Gastrocnemius medialis (tissue), 4 donors: ENCODE measurements at regions of chr5 and their contacts with region 1.

Region 1: GRCh38 chr5:150245111-150245789 is 44.3 kb downstream of the CAMK2A start:
- DNase-seq: peak; percentile 92 to 97
- ATAC-seq: peak; percentile 60 to 71
- H3K4me3 ChIP-seq: peak overlapping the region; percentile 44 to 66 (median 61)
- H3K27ac ChIP-seq: peak overlapping the region; percentile 91 to 100 (median 100)
- H3K4me1 ChIP-seq: peaks cover 51 to 62% of the 10 kb centered on the region in 2 donors
- H3K27me3 ChIP-seq: no peaks in the 10 kb centered on the region
- CTCF ChIP-seq: no peak
- POLR2A ChIP-seq: peak; percentile 90

Region 2: GRCh38 chr5:150180241-150181026 is 64.8 kb before region 1 on chr5:
- in situ Hi-C with region 1: no loop called
- intact Hi-C with region 1: loop called (anchors 2 kb)
- DNase-seq: peak; percentile 89 to 97
- ATAC-seq: peak; percentile 87 to 93
- H3K4me3 ChIP-seq: peak overlapping the region; percentile 11 to 37 (median 27)
- H3K27ac ChIP-seq: peak overlapping the region; percentile 91 to 95 (median 94)
- H3K4me1 ChIP-seq: peaks cover 21 to 23% of the 10 kb centered on the region in 2 donors
- H3K27me3 ChIP-seq: no peaks in the 10 kb centered on the region
- CTCF ChIP-seq: no peak
- POLR2A ChIP-seq: peak; percentile 24 to 55

Region 3: DNA sequence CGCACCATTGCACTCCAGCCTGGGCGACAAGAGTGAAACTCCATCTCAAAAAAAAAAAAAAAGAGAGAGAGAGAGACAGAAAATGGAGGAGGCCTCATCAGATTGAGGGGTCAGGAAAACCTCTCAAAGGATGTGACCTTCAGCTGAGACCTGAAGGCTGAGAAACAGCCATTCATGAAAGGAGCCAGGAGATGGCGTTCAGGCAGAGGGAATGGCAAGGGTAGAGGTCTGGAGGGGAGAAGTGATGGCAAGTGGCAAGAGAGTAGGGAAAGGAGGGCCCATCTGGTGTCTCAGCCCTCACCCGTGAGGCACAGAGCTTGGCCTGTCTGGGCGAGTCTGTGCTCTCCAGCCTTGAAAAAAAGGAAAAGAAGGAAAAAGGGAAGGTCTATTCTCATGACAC is 27.3 kb after region 1 on chr5:
- in situ Hi-C with region 1: no loop called
- intact Hi-C with region 1: loop called (anchors 1 kb)
- DNase-seq: no peak
- ATAC-seq: no peak
- H3K4me3 ChIP-seq: no peak overlapping the region
- H3K27ac ChIP-seq: no peak overlapping the region
- H3K4me1 ChIP-seq: peaks cover 13 to 15% of the 10 kb centered on the region in 2 donors
- H3K27me3 ChIP-seq: no peaks in the 10 kb centered on the region
- CTCF ChIP-seq: peak in 1 of 5 experiments; percentile 18
- POLR2A ChIP-seq: no peak

Region 4: GRCh38 chr5:150357326-150358260 is 112.3 kb after region 1 on chr5 and contains the start of gene TCOF1:
- in situ Hi-C with region 1: no loop called
- intact Hi-C with region 1: loop called (anchors 5 kb)
- DNase-seq: peak; percentile 91 to 95
- ATAC-seq: peak; percentile 94
- H3K4me3 ChIP-seq: peak within 1 kb of the TSS; percentile 74 to 92 (median 78)
- H3K27ac ChIP-seq: peak within 1 kb of the TSS; percentile 77 to 85 (median 78)
- H3K4me1 ChIP-seq: peaks cover 12 to 14% of the 10 kb centered on the region in 2 donors
- H3K27me3 ChIP-seq: no peaks in the 10 kb centered on the region
- CTCF ChIP-seq: no peak
- POLR2A ChIP-seq: peak; percentile 60
- total RNA-seq, gene TCOF1: 22.1 to 31.7 (median 27.1) TPM

Region 5: GRCh38 chr5:150540615-150541396 is 295.6 kb after region 1 on chr5:
- in situ Hi-C with region 1: no loop called
- intact Hi-C with region 1: no loop called
- DNase-seq: peak in 1 of 2 donors; percentile 52
- ATAC-seq: peak; percentile 62 to 90
- H3K4me3 ChIP-seq: no peak overlapping the region
- H3K27ac ChIP-seq: peak overlapping the region in 3 of 4 donors; percentile 30 to 74 (median 59)
- H3K4me1 ChIP-seq: peaks cover 0 to 11% of the 10 kb centered on the region in 2 donors
- H3K27me3 ChIP-seq: no peaks in the 10 kb centered on the region
- CTCF ChIP-seq: no peak
- POLR2A ChIP-seq: no peak

Region 6: DNA sequence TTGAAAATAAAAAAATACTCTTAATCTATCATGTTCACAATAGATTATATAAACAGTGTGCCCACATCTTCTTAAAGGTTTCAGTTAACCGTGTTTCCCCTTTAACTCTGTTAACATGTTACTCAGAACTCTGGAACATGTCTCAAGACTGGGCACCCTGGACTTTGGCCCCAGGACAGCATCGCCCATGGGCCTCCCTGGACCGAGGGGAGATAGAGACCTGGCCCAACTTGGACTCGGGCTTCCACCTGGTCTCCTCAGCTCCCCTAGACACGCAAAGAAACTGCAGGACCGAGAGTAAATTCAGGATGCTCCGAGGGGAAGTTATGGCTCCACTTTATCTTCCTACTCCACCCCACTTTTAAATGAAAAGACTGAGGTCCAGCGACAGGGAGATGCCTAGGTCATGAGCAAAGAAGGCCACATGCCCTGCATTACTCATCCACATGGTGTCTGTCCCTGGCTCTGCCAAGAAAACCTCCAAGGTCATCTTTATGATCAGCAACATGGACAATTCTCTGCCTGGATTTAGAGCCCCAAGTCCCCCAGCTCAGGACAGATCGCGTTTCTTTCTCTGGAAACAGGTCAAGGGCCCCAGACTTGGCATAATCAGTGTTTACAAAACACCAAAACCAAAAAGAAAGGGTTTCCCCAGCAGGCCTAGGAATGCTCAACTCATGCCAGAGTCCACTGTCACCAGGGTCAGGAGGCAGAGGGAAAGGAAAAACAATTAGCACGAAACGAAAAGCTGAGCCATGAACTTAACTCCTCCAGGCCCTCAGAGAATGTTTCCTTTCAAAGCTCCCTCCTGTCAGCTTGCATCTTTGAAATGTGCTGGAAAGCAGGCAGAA is 792.5 kb after region 1 on chr5:
- in situ Hi-C with region 1: no loop called
- intact Hi-C with region 1: loop called (anchors 2 kb)
- DNase-seq: peak; percentile 81 to 84
- ATAC-seq: peak; percentile 41 to 54
- H3K4me3 ChIP-seq: no peak overlapping the region
- H3K27ac ChIP-seq: peak overlapping the region; percentile 88 to 98 (median 95)
- H3K4me1 ChIP-seq: peaks cover 48 to 54% of the 10 kb centered on the region in 2 donors
- H3K27me3 ChIP-seq: no peaks in the 10 kb centered on the region
- CTCF ChIP-seq: no peak
- POLR2A ChIP-seq: peak in 1 of 2 donors; percentile 41